Lower leg skin (tissue), 4 donors: ENCODE measurements at regions of chr21 and their contacts with region 1.

Region 1: DNA sequence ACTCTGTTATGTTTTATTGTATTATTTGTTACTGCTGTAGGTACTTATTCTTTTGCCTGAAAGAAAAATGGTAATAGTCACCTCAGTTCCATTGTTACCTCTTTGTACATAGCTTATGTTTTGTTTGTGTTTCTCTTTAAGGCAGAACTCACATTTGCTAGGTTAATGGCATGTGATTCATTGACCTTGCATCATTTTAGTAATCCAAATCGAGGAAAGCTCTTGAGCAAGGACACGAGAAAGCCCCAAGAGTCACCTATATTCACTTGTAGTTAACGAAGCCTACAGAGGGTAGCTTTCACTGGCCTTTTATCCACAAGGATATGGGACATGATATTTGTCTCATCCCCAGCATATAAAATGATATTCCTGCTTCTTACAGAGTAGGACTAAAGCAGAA is 1765.2 kb downstream of the NCAM2 start:
- DNase-seq: no peak
- H3K4me3 ChIP-seq: no peak overlapping the region
- CTCF ChIP-seq: no peak
- POLR2A ChIP-seq: no peak

Region 2: DNA sequence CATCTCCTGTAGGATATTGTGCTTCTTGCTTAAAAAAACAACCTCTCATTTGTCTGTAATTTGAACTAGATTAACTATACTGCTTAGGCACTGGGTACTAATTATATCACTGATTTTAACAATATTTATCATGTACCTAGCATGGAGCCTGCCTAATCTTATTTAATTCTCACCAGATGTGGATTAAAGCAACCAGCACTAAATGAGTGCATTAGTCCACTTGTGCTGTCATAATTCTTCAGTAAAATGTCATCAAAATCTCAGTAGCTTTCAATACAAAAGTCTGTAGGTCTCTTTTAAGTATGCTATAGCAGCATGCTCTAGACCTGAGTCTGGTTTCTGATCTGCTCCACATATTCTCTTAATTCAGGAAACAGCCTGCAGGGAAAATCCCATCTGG is 1397.2 kb before region 1 on chr21:
- intact Hi-C with region 1: loop called (anchors 10 kb)
- DNase-seq: no peak
- H3K4me3 ChIP-seq: no peak overlapping the region
- CTCF ChIP-seq: no peak
- POLR2A ChIP-seq: no peak